ENCODE measurements at regions of chr19 and their contacts with region 1.

Region 1: DNA sequence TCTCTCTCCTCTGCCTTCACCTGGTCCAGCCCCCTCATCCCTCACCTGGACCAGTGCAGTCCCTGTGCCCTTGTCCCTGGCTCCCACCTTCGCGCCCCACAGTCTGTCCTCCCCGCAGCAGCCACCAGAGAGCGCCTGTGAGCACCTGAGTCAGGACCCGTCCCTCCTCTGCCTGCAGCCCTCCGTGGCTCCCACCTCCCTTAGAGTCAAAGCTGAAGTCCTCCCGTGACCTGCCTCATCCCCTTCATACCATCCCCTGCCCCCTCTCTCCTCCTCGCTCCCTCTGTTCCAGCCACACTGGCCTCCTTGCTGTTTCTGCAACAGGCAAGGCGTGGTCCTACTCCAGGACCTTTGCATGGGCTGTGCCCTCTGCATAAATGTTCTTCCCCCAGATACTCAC is 10.3 kb downstream of the CELF5 start:
- DNase-seq: peak; percentile 80
- ATAC-seq: peak; percentile 69
- H3K4me3 Mint-ChIP-seq: no peak overlapping the region
- H3K27ac Mint-ChIP-seq: no peak overlapping the region
- H3K4me1 Mint-ChIP-seq: no peaks in the 10 kb centered on the region
- H3K27me3 Mint-ChIP-seq: peaks cover 2% of the 10 kb centered on the region; the same call in 1 of the 2 replicates
- CTCF ChIP-seq: peak; percentile 49; the same call in 1 of the 2 replicates

Region 2: DNA sequence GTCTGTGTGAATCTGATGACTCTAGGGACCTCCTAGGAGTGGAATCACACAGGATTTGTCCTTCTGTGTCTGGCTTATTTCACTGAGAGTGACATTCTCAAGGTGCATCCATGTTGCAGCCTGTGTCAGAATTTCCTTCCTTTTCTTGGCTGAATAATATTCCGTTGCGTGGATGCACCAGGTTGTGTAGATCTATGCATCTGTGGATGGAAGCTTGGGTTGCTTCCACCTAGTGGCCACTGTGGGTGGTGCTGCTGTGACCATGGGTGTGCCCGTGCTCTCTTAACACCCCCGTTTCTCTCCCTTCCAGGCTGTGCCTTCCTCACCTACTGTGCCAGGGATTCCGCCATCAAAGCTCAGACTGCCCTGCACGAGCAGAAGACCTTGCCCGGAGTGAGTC is 15.9 kb after region 1 on chr19:
- CTCF ChIA-PET with region 1: interaction called, 11 read pairs
- POLR2A ChIA-PET with region 1: no interaction called
- DNase-seq: peak; percentile 45
- ATAC-seq: peak; percentile 46; the same call in 1 of the 2 replicates
- H3K4me3 Mint-ChIP-seq: no peak overlapping the region
- H3K27ac Mint-ChIP-seq: no peak overlapping the region
- H3K4me1 Mint-ChIP-seq: peaks cover 3% of the 10 kb centered on the region
- H3K27me3 Mint-ChIP-seq: peaks cover 6% of the 10 kb centered on the region
- CTCF ChIP-seq: peak; percentile 64